ENCODE measurements at regions of chr6 and their contacts with region 1.

Region 1: DNA sequence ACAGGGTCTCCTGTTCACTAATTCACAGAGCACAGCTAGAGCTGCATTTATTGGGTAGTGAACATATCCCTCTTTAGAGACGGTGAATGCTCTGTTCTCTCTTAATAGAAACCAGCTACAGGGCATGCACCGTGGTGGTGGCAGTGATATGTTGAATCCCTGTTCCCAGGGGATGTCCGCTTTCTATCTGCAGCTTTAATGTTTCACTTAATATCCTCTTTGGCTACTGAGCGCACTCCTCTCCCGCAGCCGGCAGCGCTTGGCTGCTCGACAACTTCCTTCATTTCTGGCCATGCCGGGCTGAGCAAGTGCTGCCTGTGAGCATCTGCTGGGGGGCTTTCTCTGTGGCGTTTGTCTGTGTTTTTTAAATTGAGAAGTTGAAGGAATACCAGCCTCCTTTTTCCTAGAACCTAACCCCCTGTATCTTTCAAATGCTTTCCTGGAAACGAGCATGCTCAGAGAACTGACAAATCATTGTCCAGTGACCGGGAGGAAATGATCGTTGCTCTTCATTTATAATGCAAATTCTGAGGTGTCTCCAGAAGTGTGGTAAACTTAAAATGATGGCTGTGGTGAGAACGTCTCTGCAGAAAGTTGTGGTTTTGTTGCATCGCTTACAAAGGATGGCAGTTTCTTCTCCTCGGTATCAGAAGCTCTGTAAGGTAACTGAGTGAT is 297.9 kb downstream of the UTRN start:
- DNase-seq: peak; percentile 30
- ATAC-seq: peak; percentile 67
- H3K4me3 ChIP-seq: peak overlapping the region; percentile 11; the same call in 1 of the 2 replicates
- H3K27ac ChIP-seq: no peak overlapping the region
- H3K4me1 ChIP-seq: peaks cover 4% of the 10 kb centered on the region
- H3K27me3 ChIP-seq: no peaks in the 10 kb centered on the region
- CTCF ChIP-seq: no peak
- POLR2A ChIP-seq: no peak
- RAD21 ChIP-seq: no peak

Region 2: GRCh38 chr6:144379356-144379755 is 203.7 kb before region 1 on chr6:
- CTCF ChIA-PET with region 1: no interaction called
- POLR2A ChIA-PET with region 1: no interaction called
- dilution Hi-C with region 1: no loop called
- in situ Hi-C with region 1: no loop called
- intact Hi-C with region 1: no loop called
- DNase-seq: peak; percentile 71
- ATAC-seq: peak; percentile 45
- H3K4me3 ChIP-seq: no peak overlapping the region
- H3K27ac ChIP-seq: peak overlapping the region; percentile 42; the same call in 1 of the 2 replicates
- H3K4me1 ChIP-seq: peaks cover 7% of the 10 kb centered on the region
- H3K27me3 ChIP-seq: no peaks in the 10 kb centered on the region
- CTCF ChIP-seq: no peak
- POLR2A ChIP-seq: no peak
- RAD21 ChIP-seq: no peak

Region 3: DNA sequence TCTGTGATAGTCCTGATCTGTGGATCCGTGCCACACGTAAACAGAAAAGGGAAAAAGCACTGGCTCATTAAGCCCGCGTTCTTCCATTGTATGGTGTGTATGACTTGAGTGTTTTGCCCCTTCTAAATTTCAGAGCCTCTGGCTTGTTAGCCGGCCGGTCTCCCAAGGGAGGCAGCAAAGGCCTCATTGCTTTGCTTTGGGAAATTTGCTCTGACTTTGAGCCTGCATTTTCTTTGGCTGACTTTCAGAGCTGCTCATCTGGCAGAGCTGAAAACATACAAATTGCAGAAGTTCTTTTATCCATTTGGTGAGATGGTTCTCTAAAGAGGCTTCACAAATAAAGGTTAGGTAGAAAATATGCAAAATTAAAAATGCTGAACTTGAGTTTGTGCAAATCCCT is 174.9 kb before region 1 on chr6:
- CTCF ChIA-PET with region 1: no interaction called
- POLR2A ChIA-PET with region 1: no interaction called
- dilution Hi-C with region 1: no loop called
- in situ Hi-C with region 1: no loop called
- intact Hi-C with region 1: no loop called
- DNase-seq: peak; percentile 18
- ATAC-seq: peak; percentile 37; the same call in 1 of the 2 replicates
- H3K4me3 ChIP-seq: no peak overlapping the region
- H3K27ac ChIP-seq: no peak overlapping the region
- H3K4me1 ChIP-seq: peaks cover 2% of the 10 kb centered on the region; the same call in 1 of the 2 replicates
- H3K27me3 ChIP-seq: no peaks in the 10 kb centered on the region
- CTCF ChIP-seq: no peak
- POLR2A ChIP-seq: no peak
- RAD21 ChIP-seq: no peak

Region 4: DNA sequence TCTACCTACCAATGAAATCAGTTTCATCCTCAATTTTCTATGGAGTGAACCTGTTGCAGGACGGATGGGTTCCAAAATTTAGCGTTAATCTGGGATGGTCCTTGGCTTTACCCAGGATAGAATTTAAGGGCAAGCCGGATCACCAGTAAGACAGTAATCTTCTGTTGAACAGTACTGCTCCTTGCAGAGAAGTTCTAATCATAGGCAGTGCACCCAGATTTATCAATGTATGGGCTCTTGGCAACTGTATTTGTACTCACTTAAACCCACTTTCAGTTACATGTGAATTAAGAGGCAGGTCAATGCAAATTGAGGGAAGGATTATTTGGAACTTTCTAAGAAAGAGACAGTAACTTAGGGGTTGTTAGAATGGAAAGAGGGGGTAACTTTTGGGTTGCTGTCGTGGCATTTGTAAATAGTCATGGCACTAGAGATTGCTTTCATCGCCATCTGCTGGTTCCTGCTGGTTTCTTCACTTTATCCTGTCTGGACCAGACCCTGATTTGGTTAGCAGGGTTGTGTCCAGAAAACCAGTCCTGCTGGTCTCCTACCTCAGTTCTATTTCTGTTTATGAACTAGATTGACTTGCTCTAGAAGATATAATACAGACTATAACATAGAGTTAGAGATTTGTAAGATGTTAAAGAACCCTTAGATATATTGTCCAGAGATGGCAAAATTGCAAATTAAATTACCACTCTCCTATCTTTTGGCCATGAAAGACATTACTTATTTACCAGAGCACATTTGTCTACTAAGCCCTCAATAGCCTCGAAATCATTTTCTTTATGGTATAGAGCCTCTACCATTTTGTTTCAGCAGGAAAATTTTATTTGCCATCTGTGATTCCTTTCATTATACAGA is 348.3 kb after region 1 on chr6:
- CTCF ChIA-PET with region 1: interaction called, 4 read pairs
- POLR2A ChIA-PET with region 1: no interaction called
- dilution Hi-C with region 1: no loop called
- in situ Hi-C with region 1: loop called (anchors 5 kb)
- intact Hi-C with region 1: loop called (anchors 1 kb)
- DNase-seq: peak; percentile 36
- ATAC-seq: peak; percentile 76
- H3K4me3 ChIP-seq: no peak overlapping the region
- H3K27ac ChIP-seq: no peak overlapping the region
- H3K4me1 ChIP-seq: no peaks in the 10 kb centered on the region
- H3K27me3 ChIP-seq: no peaks in the 10 kb centered on the region
- CTCF ChIP-seq: peak; percentile 66
- POLR2A ChIP-seq: no peak
- RAD21 ChIP-seq: peak; percentile 70

Region 5: DNA sequence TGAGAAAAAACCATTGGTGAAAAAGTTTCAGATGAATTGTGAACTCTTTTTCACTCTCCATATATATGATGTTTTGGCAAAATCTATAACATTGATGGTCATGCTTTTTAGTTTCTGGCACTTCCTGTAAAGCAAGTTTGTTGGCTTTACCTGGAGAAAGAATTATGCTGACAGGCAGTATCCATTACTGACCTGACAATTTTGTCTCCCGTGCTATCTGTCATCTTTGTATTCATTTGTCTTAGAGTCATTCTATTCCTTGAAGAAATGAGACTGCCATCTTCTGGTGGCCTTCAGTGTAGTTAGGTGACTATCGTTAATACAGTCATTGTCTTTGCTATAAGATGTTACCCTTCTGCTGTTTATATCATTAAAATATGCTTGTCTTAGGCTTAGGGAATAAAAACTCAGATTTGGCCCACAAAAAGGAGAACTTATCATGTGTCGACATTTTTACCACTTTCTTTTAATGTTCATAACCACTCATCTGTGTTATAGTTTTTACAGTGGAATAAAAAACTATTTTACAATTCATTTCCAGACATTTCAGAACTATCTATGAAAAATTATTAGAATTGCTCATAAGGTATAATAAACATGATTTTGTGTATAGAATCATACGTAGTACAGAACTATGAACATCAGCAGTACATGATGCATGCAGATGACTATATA is 445.2 kb after region 1 on chr6:
- CTCF ChIA-PET with region 1: interaction called, 3 read pairs
- POLR2A ChIA-PET with region 1: no interaction called
- dilution Hi-C with region 1: no loop called
- in situ Hi-C with region 1: no loop called
- intact Hi-C with region 1: loop called (anchors 1 kb)
- DNase-seq: peak; percentile 33
- ATAC-seq: peak; percentile 80; the same call in 1 of the 2 replicates
- H3K4me3 ChIP-seq: no peak overlapping the region
- H3K27ac ChIP-seq: no peak overlapping the region
- H3K4me1 ChIP-seq: no peaks in the 10 kb centered on the region
- H3K27me3 ChIP-seq: no peaks in the 10 kb centered on the region
- CTCF ChIP-seq: peak; percentile 52
- POLR2A ChIP-seq: no peak
- RAD21 ChIP-seq: peak; percentile 54

Region 6: GRCh38 chr6:145204301-145204700 is 621.2 kb after region 1 on chr6:
- CTCF ChIA-PET with region 1: no interaction called
- POLR2A ChIA-PET with region 1: no interaction called
- dilution Hi-C with region 1: no loop called
- in situ Hi-C with region 1: no loop called
- intact Hi-C with region 1: no loop called
- DNase-seq: no peak
- ATAC-seq: no peak
- H3K4me3 ChIP-seq: no peak overlapping the region
- H3K27ac ChIP-seq: no peak overlapping the region
- H3K4me1 ChIP-seq: peaks cover 2% of the 10 kb centered on the region; the same call in 1 of the 2 replicates
- H3K27me3 ChIP-seq: no peaks in the 10 kb centered on the region
- CTCF ChIP-seq: no peak
- POLR2A ChIP-seq: no peak
- RAD21 ChIP-seq: no peak

Region 7: DNA sequence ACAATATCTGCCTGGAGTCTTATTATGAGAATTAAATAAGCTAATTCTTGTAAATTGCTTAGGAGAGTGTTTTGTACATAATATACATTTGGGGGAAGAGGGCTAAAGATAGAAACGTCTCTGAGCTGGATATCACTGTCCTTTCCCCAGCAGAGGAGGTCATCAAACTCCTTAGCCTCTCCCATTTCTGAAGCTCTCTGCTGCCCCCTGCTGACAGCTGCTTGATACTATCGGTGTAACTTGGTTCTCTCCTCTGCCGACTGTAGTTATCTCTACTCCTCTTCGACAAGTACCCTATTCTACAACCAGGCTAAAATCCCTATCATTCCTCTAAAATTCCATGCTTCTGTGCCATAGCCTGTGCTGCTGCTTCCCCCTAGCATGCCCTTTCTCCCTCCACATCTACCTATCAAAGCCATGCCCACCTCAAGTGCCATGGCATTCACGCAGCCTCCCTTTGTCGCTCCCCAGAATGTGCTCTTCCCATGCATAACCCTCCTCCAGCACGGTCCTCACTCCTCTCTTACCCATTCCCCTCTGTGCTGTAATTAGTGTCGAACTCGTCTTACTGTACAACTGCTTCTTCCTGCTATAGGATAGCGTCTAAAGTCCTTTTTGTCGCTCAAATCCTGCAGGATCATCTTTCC is 1051.0 kb after region 1 on chr6:
- CTCF ChIA-PET with region 1: no interaction called
- POLR2A ChIA-PET with region 1: no interaction called
- dilution Hi-C with region 1: no loop called
- in situ Hi-C with region 1: loop called (anchors 5 kb)
- intact Hi-C with region 1: loop called (anchors 1 kb)
- DNase-seq: peak; percentile 76
- ATAC-seq: peak; percentile 99
- H3K4me3 ChIP-seq: no peak overlapping the region
- H3K27ac ChIP-seq: no peak overlapping the region
- H3K4me1 ChIP-seq: no peaks in the 10 kb centered on the region
- H3K27me3 ChIP-seq: no peaks in the 10 kb centered on the region
- CTCF ChIP-seq: peak; percentile 80
- POLR2A ChIP-seq: no peak
- RAD21 ChIP-seq: peak; percentile 85

Measured in IMR-90 (cell line).